ENCODE measurements at regions of chrX and their contacts with region 1.

Region 1: DNA sequence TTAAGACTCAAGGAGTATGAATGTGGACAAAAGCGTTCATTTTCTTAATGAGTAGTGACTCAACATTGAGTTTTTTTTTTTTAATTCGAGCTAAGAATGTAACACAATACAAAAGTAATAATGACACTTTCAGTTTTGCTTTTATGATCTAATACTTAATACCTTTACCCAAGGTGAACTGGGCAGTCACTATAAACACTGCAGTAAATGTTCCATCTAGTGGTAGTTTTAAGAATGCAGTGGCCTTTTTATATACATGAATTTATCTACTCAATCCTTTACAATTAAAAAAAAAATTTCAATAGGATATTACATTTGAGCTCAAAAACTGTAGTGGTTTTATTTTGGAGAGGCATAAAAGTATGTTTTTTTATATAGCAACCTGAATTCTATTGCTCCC is 33.9 kb downstream of the PDK3 start:
- DNase-seq: peak; percentile 56
- ATAC-seq: peak; percentile 56
- H3K4me3 ChIP-seq: no peak overlapping the region
- H3K4me3 Mint-ChIP-seq: no peak overlapping the region
- H3K27ac ChIP-seq: peak overlapping the region in 1 of 2 donors; percentile 37
- H3K27ac Mint-ChIP-seq: no peak overlapping the region
- H3K4me1 ChIP-seq: peaks cover 3 to 6% of the 10 kb centered on the region in 2 donors
- H3K4me1 Mint-ChIP-seq: peaks cover 18% of the 10 kb centered on the region
- H3K27me3 ChIP-seq: no peaks in the 10 kb centered on the region
- H3K27me3 Mint-ChIP-seq: no peaks in the 10 kb centered on the region
- CTCF ChIP-seq: peak; percentile 66

Region 2: GRCh38 chrX:24479924-24480323 is 19.1 kb before region 1 on chrX:
- CTCF ChIA-PET with region 1: interaction called, 16 read pairs
- POLR2A ChIA-PET with region 1: no interaction called
- intact Hi-C with region 1: loop called (anchors 1 kb)
- DNase-seq: peak; percentile 89
- ATAC-seq: peak; percentile 96
- H3K4me3 ChIP-seq: peak overlapping the region; percentile 31 to 62 (median 42)
- H3K4me3 Mint-ChIP-seq: peak overlapping the region; percentile 92
- H3K27ac ChIP-seq: peak overlapping the region; percentile 93 to 96
- H3K27ac Mint-ChIP-seq: peak overlapping the region; percentile 99
- H3K4me1 ChIP-seq: peaks cover 33 to 49% of the 10 kb centered on the region in 2 donors
- H3K4me1 Mint-ChIP-seq: peaks cover 62% of the 10 kb centered on the region
- H3K27me3 ChIP-seq: no peaks in the 10 kb centered on the region
- H3K27me3 Mint-ChIP-seq: no peaks in the 10 kb centered on the region
- CTCF ChIP-seq: no peak